Heart right ventricle (tissue), 16 donors: ENCODE measurements at regions of chr9 and their contacts with region 1.

Region 1: DNA sequence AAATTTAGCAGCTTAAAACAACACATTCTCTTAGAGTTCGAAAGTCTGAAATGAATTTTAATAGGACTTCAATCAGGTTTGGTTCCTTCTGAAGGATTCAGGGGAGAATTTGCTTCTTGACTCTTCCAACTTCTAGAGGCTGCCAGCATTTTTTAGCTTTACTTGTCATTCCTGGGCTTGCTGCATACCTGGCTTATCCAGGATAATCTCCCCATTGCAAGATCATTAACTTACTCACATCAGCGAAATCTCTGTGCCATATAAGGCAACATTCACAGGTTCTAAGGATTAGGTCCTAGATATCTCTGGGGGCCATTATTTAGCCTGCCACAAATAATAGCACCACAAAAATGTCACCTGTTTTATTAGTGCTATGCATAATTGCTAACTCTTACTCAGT is 46.2 kb upstream of the PCSK5 start:
- DNase-seq: no peak
- ATAC-seq: no peak
- H3K4me3 ChIP-seq: no peak overlapping the region
- H3K27ac ChIP-seq: no peak overlapping the region
- H3K4me1 ChIP-seq: peaks cover 0 to 5% (median 0%) of the 10 kb centered on the region in 9 donors
- H3K27me3 ChIP-seq: no peaks in the 10 kb centered on the region
- CTCF ChIP-seq: no peak

Region 2: DNA sequence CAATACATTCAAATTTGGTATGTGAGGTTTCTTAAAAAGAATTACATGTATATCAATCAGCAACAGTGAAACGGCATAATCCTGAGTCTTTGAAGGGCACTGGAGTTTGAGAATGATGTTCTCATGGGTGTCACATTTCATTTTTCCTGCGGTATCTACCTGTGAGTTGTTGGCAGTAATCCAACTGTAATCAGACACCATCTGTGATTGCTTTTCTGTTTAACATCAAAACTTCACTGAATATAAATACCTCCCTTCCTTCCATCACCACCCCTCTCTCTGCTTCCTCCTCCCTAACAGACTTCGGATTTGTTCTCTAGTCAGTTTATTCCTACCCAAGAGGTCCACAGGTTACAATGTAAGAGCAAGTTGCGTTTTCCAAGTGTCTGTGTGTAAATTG is 229.0 kb before region 1 on chr9:
- intact Hi-C with region 1: loop called in 1 of 10 experiments (anchors 10 kb)
- DNase-seq: no peak
- ATAC-seq: no peak
- H3K4me3 ChIP-seq: no peak overlapping the region
- H3K27ac ChIP-seq: no peak overlapping the region
- H3K4me1 ChIP-seq: peaks cover 0 to 18% (median 0%) of the 10 kb centered on the region in 9 donors
- H3K27me3 ChIP-seq: no peaks in the 10 kb centered on the region
- CTCF ChIP-seq: no peak

Region 3: GRCh38 chr9:75754080-75754479 is 90.2 kb before region 1 on chr9:
- intact Hi-C with region 1: loop called in 1 of 10 experiments (anchors 10 kb)
- DNase-seq: peak; percentile 53 to 60
- ATAC-seq: peak; percentile 76 to 99 (median 96)
- H3K4me3 ChIP-seq: no peak overlapping the region
- H3K27ac ChIP-seq: no peak overlapping the region
- H3K4me1 ChIP-seq: peaks cover 0 to 6% (median 0%) of the 10 kb centered on the region in 9 donors
- H3K27me3 ChIP-seq: no peaks in the 10 kb centered on the region
- CTCF ChIP-seq: no peak

Region 4: DNA sequence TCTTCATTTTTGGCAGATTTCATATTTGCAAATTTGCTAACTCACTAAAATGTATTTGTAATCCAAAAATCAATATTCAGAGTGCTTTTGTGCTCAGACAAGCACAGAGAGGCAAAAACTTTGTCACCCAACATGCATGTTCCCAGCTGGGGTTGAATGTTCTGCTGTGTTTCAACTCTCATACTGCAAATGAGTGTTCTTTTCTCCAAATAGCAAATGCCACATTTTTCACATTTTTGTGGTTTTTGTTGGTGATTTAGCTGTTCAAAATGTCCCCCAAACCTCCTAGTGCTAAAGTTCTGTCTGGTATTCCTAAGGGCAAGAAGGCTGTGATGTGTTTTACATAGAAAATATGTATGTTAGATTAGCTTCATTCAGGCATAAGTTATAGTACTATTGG is 41.2 kb before region 1 on chr9:
- intact Hi-C with region 1: no loop called
- DNase-seq: no peak
- ATAC-seq: no peak
- H3K4me3 ChIP-seq: no peak overlapping the region
- H3K27ac ChIP-seq: no peak overlapping the region
- H3K4me1 ChIP-seq: no peaks in the 10 kb centered on the region
- H3K27me3 ChIP-seq: no peaks in the 10 kb centered on the region
- CTCF ChIP-seq: no peak